Activated CD4-positive, alpha-beta T cell treated with anti-CD3 and anti-CD28 coated beads for 36 hours (primary cell): ENCODE measurements at regions of chr5 and their contacts with region 1.

Region 1: GRCh38 chr5:39074016-39074886 is at the start of gene RICTOR:
- DNase-seq: peak; percentile 97
- ATAC-seq: peak; percentile 84
- H3K4me3 Mint-ChIP-seq: peak within 1 kb of the TSS; percentile 96
- H3K27ac Mint-ChIP-seq: peak within 1 kb of the TSS; percentile 99
- H3K4me1 Mint-ChIP-seq: peaks cover 40% of the 10 kb centered on the region
- H3K27me3 Mint-ChIP-seq: peaks cover 7% of the 10 kb centered on the region
- total RNA-seq, gene RICTOR: 23.2 to 28.5 TPM

Region 2: GRCh38 chr5:37370864-37371726 is 1703.2 kb before region 1 on chr5 and contains the start of gene NUP155:
- CTCF ChIA-PET with region 1: no interaction called
- POLR2A ChIA-PET with region 1: no interaction called
- intact Hi-C with region 1: loop called in 1 of 2 experiments (anchors 10 kb)
- DNase-seq: peak; percentile 95
- ATAC-seq: peak; percentile 95
- H3K4me3 Mint-ChIP-seq: peak within 1 kb of the TSS; percentile 98
- H3K27ac Mint-ChIP-seq: peak within 1 kb of the TSS; percentile 99
- H3K4me1 Mint-ChIP-seq: peaks cover 35% of the 10 kb centered on the region
- H3K27me3 Mint-ChIP-seq: no peaks in the 10 kb centered on the region
- total RNA-seq, gene NUP155: 94.9 to 113 TPM

Region 3: GRCh38 chr5:37926732-37927131 is 1147.5 kb before region 1 on chr5:
- CTCF ChIA-PET with region 1: no interaction called
- POLR2A ChIA-PET with region 1: no interaction called
- intact Hi-C with region 1: no loop called
- DNase-seq: no peak
- ATAC-seq: no peak
- H3K4me3 Mint-ChIP-seq: no peak overlapping the region
- H3K27ac Mint-ChIP-seq: no peak overlapping the region
- H3K4me1 Mint-ChIP-seq: no peaks in the 10 kb centered on the region
- H3K27me3 Mint-ChIP-seq: peaks cover 22% of the 10 kb centered on the region

Region 4: GRCh38 chr5:38809388-38810359 is 264.6 kb before region 1 on chr5:
- CTCF ChIA-PET with region 1: no interaction called
- POLR2A ChIA-PET with region 1: no interaction called
- intact Hi-C with region 1: no loop called
- DNase-seq: peak; percentile 81
- ATAC-seq: peak; percentile 85
- H3K4me3 Mint-ChIP-seq: no peak overlapping the region
- H3K27ac Mint-ChIP-seq: no peak overlapping the region
- H3K4me1 Mint-ChIP-seq: peaks cover 11% of the 10 kb centered on the region
- H3K27me3 Mint-ChIP-seq: peaks cover 30% of the 10 kb centered on the region

Region 5: DNA sequence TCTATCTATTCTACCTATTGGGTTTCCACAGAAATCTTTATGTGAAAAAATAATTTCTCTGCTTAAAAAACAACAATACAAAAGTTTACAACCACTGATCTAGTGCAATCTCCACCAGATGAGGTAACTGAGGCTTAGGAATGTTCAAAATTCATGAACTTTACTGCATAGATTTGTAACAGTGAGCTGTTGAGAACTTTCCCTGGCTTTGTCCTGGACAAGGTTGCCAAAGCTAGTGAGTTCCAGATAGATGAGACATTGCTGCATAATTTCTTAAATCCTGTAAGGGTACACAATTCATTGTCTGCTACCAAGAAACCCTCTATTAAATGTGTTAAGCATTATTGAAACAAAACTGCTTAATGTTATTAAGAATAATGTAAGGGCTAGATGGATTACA is 125.8 kb before region 1 on chr5:
- CTCF ChIA-PET with region 1: no interaction called
- POLR2A ChIA-PET with region 1: no interaction called
- intact Hi-C with region 1: no loop called
- DNase-seq: no peak
- ATAC-seq: no peak
- H3K4me3 Mint-ChIP-seq: no peak overlapping the region
- H3K27ac Mint-ChIP-seq: no peak overlapping the region
- H3K4me1 Mint-ChIP-seq: no peaks in the 10 kb centered on the region
- H3K27me3 Mint-ChIP-seq: no peaks in the 10 kb centered on the region

Region 6: DNA sequence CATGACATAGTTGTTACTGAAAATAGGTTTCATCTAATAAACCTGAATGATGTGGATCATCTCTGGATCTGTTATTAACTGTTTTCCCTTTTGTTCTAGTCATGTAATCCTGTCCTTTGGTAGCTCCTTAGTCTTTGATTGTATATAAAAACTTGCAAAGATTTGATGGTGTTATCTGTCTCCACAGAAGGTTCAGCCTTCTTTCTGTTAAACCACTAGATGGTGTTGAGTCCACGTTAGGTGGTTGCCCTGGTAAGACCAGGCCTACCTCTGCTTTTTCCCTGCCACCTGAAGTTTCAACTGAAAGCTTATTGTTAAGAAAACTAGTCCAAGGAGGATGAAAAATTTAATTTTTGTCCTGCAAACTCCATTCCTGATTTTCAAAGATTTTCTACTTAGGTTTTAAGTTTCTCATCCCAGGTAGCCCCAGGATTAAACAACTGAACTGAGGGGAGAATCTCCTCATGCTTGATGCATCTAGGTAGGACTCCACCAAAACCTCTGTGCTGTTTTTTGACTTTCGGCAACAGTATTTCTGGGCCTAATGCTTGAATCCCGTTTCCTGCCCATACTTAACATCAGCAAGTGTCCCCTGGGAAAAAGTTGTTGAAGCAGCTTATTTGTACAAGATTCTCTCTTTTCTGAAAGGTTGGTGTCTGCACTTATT is 68.6 kb before region 1 on chr5:
- CTCF ChIA-PET with region 1: no interaction called
- POLR2A ChIA-PET with region 1: interaction called, 4 read pairs
- intact Hi-C with region 1: loop called (anchors 5 kb)
- DNase-seq: peak; percentile 13
- ATAC-seq: peak; percentile 60
- H3K4me3 Mint-ChIP-seq: no peak overlapping the region
- H3K27ac Mint-ChIP-seq: no peak overlapping the region
- H3K4me1 Mint-ChIP-seq: peaks cover 51% of the 10 kb centered on the region
- H3K27me3 Mint-ChIP-seq: no peaks in the 10 kb centered on the region

Region 7: DNA sequence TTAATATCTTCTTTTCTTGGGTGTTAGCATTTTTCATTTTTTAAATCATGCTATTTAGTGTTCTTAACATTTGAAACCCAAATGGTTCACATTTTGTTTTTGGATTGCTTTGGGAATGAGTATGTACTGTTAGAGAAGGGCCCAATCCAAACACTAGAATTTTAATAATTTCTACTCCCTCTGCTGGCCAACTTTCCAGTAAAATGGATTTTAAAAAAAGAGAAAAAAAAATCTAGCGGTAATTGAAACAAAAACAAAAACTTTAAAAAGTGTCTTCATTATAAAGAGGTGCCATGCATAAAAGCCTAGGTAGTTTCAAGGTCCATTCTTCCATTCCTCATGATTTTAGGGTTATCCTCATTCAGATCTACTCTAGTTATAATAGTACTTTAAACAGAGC is 32.1 kb after region 1 on chr5:
- CTCF ChIA-PET with region 1: interaction called, 3 read pairs
- POLR2A ChIA-PET with region 1: no interaction called
- intact Hi-C with region 1: loop called in 1 of 2 experiments (anchors 2 kb)
- DNase-seq: no peak
- ATAC-seq: no peak
- H3K4me3 Mint-ChIP-seq: no peak overlapping the region
- H3K27ac Mint-ChIP-seq: peak overlapping the region; percentile 15
- H3K4me1 Mint-ChIP-seq: peaks cover 25% of the 10 kb centered on the region
- H3K27me3 Mint-ChIP-seq: no peaks in the 10 kb centered on the region

Region 8: DNA sequence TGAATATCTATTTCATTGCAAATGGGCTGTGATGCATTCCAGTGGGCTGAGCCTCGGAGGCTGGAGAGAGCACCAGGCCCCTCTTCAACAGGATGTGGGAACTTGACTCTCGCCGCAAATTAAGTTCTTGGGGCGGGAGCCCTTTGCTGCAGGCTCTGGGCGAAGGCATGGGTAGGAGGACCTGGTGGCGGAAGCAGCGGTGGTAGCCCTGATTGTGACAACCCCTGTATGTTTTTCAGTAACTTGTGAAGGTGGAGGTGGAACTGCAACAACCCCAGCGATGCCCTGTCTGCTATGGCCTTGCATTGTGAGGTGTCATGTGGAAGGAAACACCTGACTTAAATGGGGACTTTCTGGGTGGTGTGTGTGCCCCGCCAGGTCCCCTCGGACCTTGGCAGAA is 135.7 kb after region 1 on chr5:
- CTCF ChIA-PET with region 1: no interaction called
- POLR2A ChIA-PET with region 1: no interaction called
- intact Hi-C with region 1: loop called in 1 of 2 experiments (anchors 5 kb)
- DNase-seq: peak; percentile 87
- ATAC-seq: peak; percentile 59
- H3K4me3 Mint-ChIP-seq: peak overlapping the region; percentile 67
- H3K27ac Mint-ChIP-seq: peak overlapping the region; percentile 95
- H3K4me1 Mint-ChIP-seq: peaks cover 84% of the 10 kb centered on the region
- H3K27me3 Mint-ChIP-seq: no peaks in the 10 kb centered on the region

Region 9: GRCh38 chr5:39283231-39283818 is 209.1 kb after region 1 on chr5:
- CTCF ChIA-PET with region 1: interaction called, 5 read pairs
- POLR2A ChIA-PET with region 1: no interaction called
- intact Hi-C with region 1: loop called in 1 of 2 experiments (anchors 2 kb)
- DNase-seq: peak; percentile 72
- ATAC-seq: peak; percentile 99
- H3K4me3 Mint-ChIP-seq: no peak overlapping the region
- H3K27ac Mint-ChIP-seq: peak overlapping the region; percentile 91
- H3K4me1 Mint-ChIP-seq: peaks cover 45% of the 10 kb centered on the region
- H3K27me3 Mint-ChIP-seq: peaks cover 2% of the 10 kb centered on the region

Region 10: GRCh38 chr5:39826051-39826450 is 751.8 kb after region 1 on chr5:
- CTCF ChIA-PET with region 1: no interaction called
- POLR2A ChIA-PET with region 1: no interaction called
- intact Hi-C with region 1: no loop called
- DNase-seq: no peak
- ATAC-seq: no peak
- H3K4me3 Mint-ChIP-seq: no peak overlapping the region
- H3K27ac Mint-ChIP-seq: no peak overlapping the region
- H3K4me1 Mint-ChIP-seq: no peaks in the 10 kb centered on the region
- H3K27me3 Mint-ChIP-seq: no peaks in the 10 kb centered on the region